HepG2 (cell line): ENCODE measurements at regions of chr14 and their contacts with region 1.

Region 1: DNA sequence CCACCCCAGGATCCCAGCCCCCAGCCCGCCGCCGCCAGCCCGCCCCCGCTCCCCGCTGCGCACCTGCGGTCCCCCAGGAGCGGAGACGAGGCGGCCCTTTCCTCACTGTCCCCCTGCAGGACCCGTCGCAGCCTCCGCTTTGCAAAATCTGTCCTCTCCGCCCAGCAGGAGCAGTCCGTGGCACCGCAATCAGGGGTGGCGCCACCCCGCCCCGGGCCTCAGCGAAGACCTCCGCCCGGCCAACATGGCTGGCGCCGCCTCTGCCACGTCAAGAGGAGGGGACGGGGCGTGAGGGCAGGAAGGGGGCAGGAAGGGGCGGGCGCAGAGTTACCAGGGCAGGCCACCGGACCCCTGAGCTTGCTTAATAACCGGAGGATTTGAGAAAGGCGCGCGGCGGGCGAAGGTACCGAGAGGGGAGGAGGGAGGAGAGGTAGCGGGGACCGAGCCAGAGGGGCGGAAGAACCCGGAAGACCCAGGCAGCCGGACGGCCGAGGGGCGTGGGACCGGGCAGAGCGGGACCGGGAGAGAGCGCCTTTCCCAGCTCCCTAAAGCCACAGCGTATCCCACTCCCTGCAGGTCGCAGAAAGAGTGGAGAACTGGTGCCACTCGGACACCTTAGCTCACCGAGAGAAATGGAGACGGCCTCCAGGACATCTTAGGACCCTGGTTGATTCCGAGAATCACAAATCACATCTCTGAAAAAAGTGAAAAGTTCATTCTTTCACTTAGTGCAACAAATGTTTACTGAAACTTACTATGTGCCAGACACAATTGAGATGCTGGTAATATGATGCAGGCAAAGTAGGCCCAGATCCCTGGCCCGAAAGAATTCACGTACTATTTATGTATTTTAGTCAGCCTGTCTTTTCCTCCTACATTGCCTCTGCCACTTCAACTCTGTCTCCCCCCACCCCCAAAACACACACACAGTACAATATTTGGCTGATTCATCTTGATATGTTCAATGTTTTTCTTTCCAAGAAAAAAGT is at the start of gene SEC23A:
- DNase-seq: peak; percentile 99
- ATAC-seq: peak; percentile 94
- H3K4me3 ChIP-seq: peak within 1 kb of the TSS; percentile 81 to 91 (median 90)
- H3K27ac ChIP-seq: peak within 1 kb of the TSS; percentile 94
- H3K4me1 ChIP-seq: peaks cover 62% of the 10 kb centered on the region
- H3K27me3 ChIP-seq: no peaks in the 10 kb centered on the region; a peak in 1 of 5 replicates
- CTCF ChIP-seq: peak; percentile 69
- EP300 ChIP-seq: peak; percentile 72 to 80; a peak in 3 of 4 replicates
- POLR2A ChIP-seq: peak; percentile 90 to 92
- RAD21 ChIP-seq: peak; percentile 78
- total RNA-seq, gene SEC23A: 887 and 1,365 TPM in 2 replicates

Region 2: GRCh38 chr14:39015360-39015961 is 87.8 kb before region 1 on chr14:
- CTCF ChIA-PET with region 1: no interaction called
- POLR2A ChIA-PET with region 1: interaction called, 38 read pairs
- in situ Hi-C with region 1: no loop called
- intact Hi-C with region 1: no loop called
- DNase-seq: peak; percentile 84
- ATAC-seq: peak; percentile 41; the same call in 2 of the 3 replicates
- H3K4me3 ChIP-seq: no peak overlapping the region
- H3K27ac ChIP-seq: no peak overlapping the region
- H3K4me1 ChIP-seq: peaks cover 34% of the 10 kb centered on the region
- H3K27me3 ChIP-seq: no peaks in the 10 kb centered on the region
- CTCF ChIP-seq: peak; percentile 88
- EP300 ChIP-seq: no peak
- POLR2A ChIP-seq: no peak
- RAD21 ChIP-seq: peak; percentile 81

Region 3: GRCh38 chr14:39060818-39061437 is 42.3 kb before region 1 on chr14:
- CTCF ChIA-PET with region 1: no interaction called
- POLR2A ChIA-PET with region 1: interaction called, 14 read pairs
- in situ Hi-C with region 1: no loop called
- intact Hi-C with region 1: no loop called
- DNase-seq: no peak
- ATAC-seq: no peak
- H3K4me3 ChIP-seq: no peak overlapping the region
- H3K27ac ChIP-seq: no peak overlapping the region
- H3K4me1 ChIP-seq: no peaks in the 10 kb centered on the region
- H3K27me3 ChIP-seq: no peaks in the 10 kb centered on the region
- CTCF ChIP-seq: no peak
- EP300 ChIP-seq: no peak
- POLR2A ChIP-seq: no peak
- RAD21 ChIP-seq: no peak

Region 4: DNA sequence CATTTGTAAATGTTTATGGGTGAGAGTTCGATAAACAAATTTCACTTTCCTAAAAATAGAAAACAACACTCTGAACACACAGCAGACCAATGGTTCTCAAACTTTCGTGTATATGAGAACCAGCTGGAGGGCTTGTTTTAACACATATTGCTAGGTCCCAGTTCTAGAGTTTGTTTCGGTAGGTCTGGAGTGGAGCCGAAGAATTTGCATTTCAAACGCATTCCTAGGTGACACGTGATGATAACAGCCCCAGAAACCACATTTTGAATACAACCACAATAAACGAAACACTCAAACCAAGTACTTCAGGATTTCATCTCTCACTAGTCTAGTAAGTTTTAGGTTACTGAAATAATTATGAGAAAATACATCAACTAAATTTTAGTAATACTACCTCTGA is 17.3 kb before region 1 on chr14:
- CTCF ChIA-PET with region 1: no interaction called
- POLR2A ChIA-PET with region 1: interaction called, 34 read pairs
- in situ Hi-C with region 1: no loop called
- intact Hi-C with region 1: no loop called
- DNase-seq: no peak
- ATAC-seq: no peak
- H3K4me3 ChIP-seq: no peak overlapping the region
- H3K27ac ChIP-seq: no peak overlapping the region
- H3K4me1 ChIP-seq: no peaks in the 10 kb centered on the region
- H3K27me3 ChIP-seq: no peaks in the 10 kb centered on the region
- CTCF ChIP-seq: no peak
- EP300 ChIP-seq: no peak
- POLR2A ChIP-seq: no peak
- RAD21 ChIP-seq: no peak

Region 5: GRCh38 chr14:39169541-39169900 is 66.3 kb after region 1 on chr14:
- CTCF ChIA-PET with region 1: no interaction called
- POLR2A ChIA-PET with region 1: interaction called, 285 read pairs
- in situ Hi-C with region 1: no loop called
- intact Hi-C with region 1: loop called (anchors 1 kb)
- DNase-seq: no peak
- ATAC-seq: peak; percentile 44
- H3K4me3 ChIP-seq: peak overlapping the region; percentile 71 to 96 (median 90)
- H3K27ac ChIP-seq: peak overlapping the region; percentile 86
- H3K4me1 ChIP-seq: peaks cover 63% of the 10 kb centered on the region
- H3K27me3 ChIP-seq: peaks cover 0 to 7% of the 10 kb centered on the region in 2 experiments; a peak in 1 of 5 replicates
- CTCF ChIP-seq: no peak
- EP300 ChIP-seq: no peak
- POLR2A ChIP-seq: no peak
- RAD21 ChIP-seq: no peak

Region 6: DNA sequence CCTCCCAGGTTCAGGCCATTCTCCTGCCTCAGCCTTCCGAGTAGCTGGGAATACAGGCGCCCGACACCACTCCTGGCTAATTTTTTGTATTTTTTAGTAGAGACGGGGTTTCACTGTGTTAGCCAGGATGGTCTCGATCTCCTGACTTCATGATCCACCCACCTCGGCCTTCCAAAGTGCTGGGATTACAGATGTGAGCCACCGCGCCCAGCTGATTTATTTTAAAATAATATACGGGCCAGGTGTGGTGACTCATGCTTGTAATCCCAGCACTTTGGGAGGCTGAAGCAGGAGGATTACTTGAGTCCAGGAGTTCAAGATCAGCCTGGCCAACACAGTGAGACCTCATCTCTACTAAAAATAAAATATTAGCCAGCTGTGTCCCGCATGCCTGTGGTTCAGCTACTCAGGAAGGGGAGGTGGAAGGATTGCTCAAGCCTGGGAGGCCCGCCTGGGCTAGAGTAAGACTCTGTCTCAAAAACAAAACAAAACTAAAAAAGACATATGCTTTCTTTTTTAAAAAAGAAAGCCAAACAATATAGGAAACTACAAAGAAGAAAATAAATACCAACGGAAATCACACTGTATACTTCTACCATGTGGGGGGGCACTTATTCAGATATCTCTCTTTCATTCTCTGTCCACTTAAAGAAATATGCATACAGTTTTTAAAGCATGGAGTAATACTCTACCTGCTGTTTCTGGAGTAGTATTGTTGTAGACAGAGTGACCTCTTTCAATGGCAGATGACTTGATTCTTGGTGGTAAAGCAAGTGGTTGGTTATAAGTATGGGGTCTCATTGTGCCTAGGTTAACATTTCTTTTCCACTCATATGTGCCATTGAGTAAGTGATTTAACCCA is 129.5 kb after region 1 on chr14:
- CTCF ChIA-PET with region 1: no interaction called
- POLR2A ChIA-PET with region 1: interaction called, 24 read pairs
- in situ Hi-C with region 1: no loop called
- intact Hi-C with region 1: loop called (anchors 2 kb)
- DNase-seq: peak; percentile 90
- ATAC-seq: peak; percentile 84
- H3K4me3 ChIP-seq: peak overlapping the region; percentile 65 to 72 (median 65)
- H3K27ac ChIP-seq: peak overlapping the region; percentile 69
- H3K4me1 ChIP-seq: peaks cover 49% of the 10 kb centered on the region
- H3K27me3 ChIP-seq: no peaks in the 10 kb centered on the region; a peak in 1 of 5 replicates
- CTCF ChIP-seq: peak; percentile 4; the same call in 1 of the 2 replicates
- EP300 ChIP-seq: peak in 1 of 2 experiments; percentile 75; a peak in 3 of 4 replicates
- POLR2A ChIP-seq: no peak
- RAD21 ChIP-seq: peak; percentile 44

Region 7: DNA sequence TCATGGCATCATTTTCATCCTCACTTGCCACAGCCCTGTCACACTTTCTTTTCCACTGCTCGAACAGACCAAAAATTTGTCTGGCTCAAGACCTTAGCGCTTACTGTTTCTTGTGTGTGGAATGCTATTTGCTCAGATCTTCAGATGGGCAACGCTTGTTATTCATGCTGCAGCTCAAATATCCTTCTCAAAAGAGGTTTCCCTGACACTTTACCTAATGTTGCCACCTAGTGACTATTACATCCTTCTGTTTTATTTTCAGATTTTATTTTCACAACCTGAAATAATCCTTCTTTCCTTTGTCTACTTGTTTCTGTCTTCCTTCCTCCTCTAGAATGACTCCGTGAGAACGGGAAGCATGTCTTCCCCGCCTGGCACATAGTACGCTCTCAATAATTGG is 323.3 kb after region 1 on chr14:
- CTCF ChIA-PET with region 1: no interaction called
- POLR2A ChIA-PET with region 1: interaction called, 68 read pairs
- in situ Hi-C with region 1: loop called (anchors 5 kb)
- intact Hi-C with region 1: loop called (anchors 1 kb)
- DNase-seq: peak; percentile 56
- ATAC-seq: no peak
- H3K4me3 ChIP-seq: no peak overlapping the region
- H3K27ac ChIP-seq: no peak overlapping the region
- H3K4me1 ChIP-seq: peaks cover 31% of the 10 kb centered on the region
- H3K27me3 ChIP-seq: no peaks in the 10 kb centered on the region; a peak in 1 of 5 replicates
- CTCF ChIP-seq: peak; percentile 71
- EP300 ChIP-seq: no peak
- POLR2A ChIP-seq: no peak
- RAD21 ChIP-seq: no peak